AG04450 (cell line): ENCODE measurements at regions of chr3 and their contacts with region 1.

Region 1: DNA sequence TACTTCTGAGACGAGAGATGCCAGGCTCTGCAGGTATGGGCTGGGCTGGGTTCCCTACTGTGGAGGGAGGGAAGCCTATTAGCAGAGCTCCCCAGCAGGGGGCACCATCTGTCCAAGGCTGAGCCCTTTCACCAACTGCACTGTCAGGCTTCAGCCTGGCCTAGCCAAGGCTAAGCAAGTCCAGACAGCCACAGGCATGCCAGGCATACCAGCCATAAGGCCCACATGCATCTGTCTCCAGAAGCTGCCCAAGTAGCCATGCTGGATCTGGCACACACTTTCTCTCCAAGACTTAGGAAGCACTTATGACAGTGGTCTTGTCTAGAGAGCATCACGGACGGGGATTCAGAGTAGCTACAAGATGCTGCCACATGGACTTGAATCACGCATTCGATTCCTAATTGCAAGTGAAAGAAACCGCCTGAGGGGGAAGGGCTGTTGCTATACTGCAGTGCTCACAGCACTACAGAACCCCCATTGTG is 28.3 kb downstream of the RUVBL1 start:
- DNase-seq: peak; percentile 65
- H3K4me3 ChIP-seq: no peak overlapping the region
- H3K27ac ChIP-seq: peak overlapping the region; percentile 57
- H3K27me3 ChIP-seq: no peaks in the 10 kb centered on the region
- CTCF ChIP-seq: peak; percentile 89

Region 2: DNA sequence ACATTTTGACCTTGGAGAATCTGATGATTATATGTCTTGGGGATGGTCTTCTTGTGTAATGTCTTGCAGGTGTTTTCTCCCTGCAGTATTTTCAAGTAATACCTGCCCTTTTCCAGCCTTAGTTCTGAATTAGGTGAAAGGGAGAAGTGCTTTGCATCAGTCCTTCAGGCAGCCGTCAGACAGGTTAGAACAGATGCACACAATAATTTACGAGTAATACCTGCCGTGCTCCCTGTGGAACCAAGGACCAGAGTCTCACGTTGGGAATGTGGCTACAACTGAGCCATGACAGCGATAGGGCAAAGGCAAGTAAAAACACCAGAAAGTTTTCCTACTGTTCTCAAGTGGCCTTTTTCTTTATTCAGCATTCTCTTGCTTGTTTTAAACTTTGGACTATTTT is 1322.1 kb before region 1 on chr3:
- CTCF ChIA-PET with region 1: no interaction called
- POLR2A ChIA-PET with region 1: no interaction called
- DNase-seq: no peak
- H3K4me3 ChIP-seq: no peak overlapping the region
- H3K27ac ChIP-seq: no peak overlapping the region
- H3K27me3 ChIP-seq: no peaks in the 10 kb centered on the region
- CTCF ChIP-seq: no peak

Region 3: DNA sequence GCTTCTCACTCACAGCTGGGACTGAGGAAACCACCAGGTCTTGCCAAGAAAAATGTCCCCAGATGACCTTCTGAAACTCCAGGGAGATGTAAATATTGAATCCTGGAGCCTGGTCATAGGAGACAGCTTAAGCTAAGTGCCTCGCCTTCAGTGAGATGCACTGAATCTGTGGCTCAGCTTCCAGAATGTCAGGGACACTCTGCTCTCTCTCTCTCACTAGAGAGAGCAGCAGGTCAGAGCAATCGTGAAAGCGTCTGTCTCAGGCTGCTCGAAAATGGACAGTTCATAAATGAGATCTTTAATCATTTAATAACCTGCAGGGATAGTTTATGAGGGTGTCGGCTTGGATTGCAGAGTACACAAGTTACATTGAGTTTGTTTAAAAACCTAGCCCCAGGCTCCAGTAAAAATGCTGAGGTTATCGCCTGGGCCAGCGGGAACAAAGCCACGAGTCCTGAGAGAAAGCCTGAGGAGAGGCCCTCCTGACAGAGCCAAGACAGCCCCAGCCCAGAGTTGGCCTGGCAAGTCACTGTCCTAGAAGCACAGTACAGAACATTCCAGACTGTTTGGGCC is 10.8 kb before region 1 on chr3:
- CTCF ChIA-PET with region 1: interaction called, 39 read pairs
- POLR2A ChIA-PET with region 1: interaction called, 4 read pairs
- DNase-seq: no peak
- H3K4me3 ChIP-seq: no peak overlapping the region
- H3K27ac ChIP-seq: peak overlapping the region; percentile 55
- H3K27me3 ChIP-seq: no peaks in the 10 kb centered on the region
- CTCF ChIP-seq: no peak

Region 4: GRCh38 chr3:128123538-128124368 is 28.5 kb after region 1 on chr3 and contains the start of gene RUVBL1:
- CTCF ChIA-PET with region 1: interaction called, 15 read pairs
- POLR2A ChIA-PET with region 1: interaction called, 5 read pairs
- DNase-seq: peak; percentile 90
- H3K4me3 ChIP-seq: peak within 1 kb of the TSS; percentile 97
- H3K27ac ChIP-seq: peak within 1 kb of the TSS; percentile 82
- H3K27me3 ChIP-seq: peaks cover 3% of the 10 kb centered on the region
- CTCF ChIP-seq: no peak
- polyA plus RNA-seq, gene RUVBL1: 79.5 and 83.3 TPM in 2 replicates

Region 5: GRCh38 chr3:128242818-128243601 is 147.7 kb after region 1 on chr3:
- CTCF ChIA-PET with region 1: no interaction called
- POLR2A ChIA-PET with region 1: no interaction called
- DNase-seq: no peak
- H3K4me3 ChIP-seq: no peak overlapping the region
- H3K27ac ChIP-seq: no peak overlapping the region
- H3K27me3 ChIP-seq: no peaks in the 10 kb centered on the region
- CTCF ChIP-seq: no peak